ENCODE measurements at regions of chr1 and their contacts with region 1.

Region 1: GRCh38 chr1:150578965-150579798 is at the start of gene MCL1:
- DNase-seq: no peak
- ATAC-seq: peak; percentile 93
- H3K4me3 ChIP-seq: peak within 1 kb of the TSS; percentile 99 to 100
- H3K27ac ChIP-seq: peak within 1 kb of the TSS; percentile 98
- H3K4me1 ChIP-seq: peaks cover 19% of the 10 kb centered on the region
- H3K27me3 ChIP-seq: no peaks in the 10 kb centered on the region
- CTCF ChIP-seq: no peak
- total RNA-seq, gene MCL1: 126 TPM

Region 2: DNA sequence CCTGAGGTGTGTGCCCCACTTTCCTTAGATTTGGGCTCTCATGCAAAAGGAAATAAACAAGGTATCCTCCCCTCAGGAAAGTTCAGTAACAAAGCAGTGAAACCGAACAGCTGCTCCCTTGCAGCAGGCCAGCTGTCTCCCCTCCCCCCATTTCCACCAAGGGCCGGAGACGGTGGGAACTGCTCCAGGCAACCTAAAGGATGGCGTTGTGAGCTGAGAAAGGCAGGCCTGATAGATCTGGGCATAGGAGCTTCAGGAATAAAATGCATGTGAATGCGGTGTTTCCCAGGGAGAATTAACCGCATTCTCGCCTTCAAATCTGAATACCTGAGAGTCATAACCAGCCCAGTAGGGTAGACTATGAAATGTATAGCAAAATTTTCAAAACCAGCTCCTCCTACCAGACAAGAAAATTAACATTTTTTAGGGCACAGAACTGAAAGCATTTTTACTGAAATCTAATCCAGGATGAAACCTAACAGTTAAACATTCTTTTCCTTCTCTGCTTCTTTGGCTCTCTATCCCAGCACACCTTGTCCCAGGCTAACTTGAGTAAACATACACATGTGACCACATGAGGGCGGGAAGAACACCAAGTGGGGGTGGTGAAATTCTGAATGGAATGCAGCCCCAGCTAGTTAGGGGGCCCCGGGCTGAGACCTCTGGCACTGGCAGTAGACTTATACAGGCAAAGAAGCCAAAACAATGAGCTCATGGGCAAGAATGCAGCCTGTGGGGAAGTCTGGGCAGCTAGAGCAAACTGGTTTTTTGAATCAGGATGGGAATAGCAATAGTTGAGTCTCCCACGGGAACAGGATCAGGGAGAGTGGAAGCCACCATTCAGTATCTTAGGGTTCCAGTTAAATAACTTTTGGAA is 11.2 kb before region 1 on chr1:
- CTCF ChIA-PET with region 1: no interaction called
- POLR2A ChIA-PET with region 1: interaction called, 12 read pairs
- in situ Hi-C with region 1: no loop called
- intact Hi-C with region 1: no loop called
- DNase-seq: no peak
- ATAC-seq: peak; percentile 58
- H3K4me3 ChIP-seq: peak overlapping the region; percentile 1 to 9; a peak in 2 of 4 replicates
- H3K27ac ChIP-seq: peak overlapping the region; percentile 82
- H3K4me1 ChIP-seq: peaks cover 73% of the 10 kb centered on the region
- H3K27me3 ChIP-seq: no peaks in the 10 kb centered on the region
- CTCF ChIP-seq: no peak

Region 3: DNA sequence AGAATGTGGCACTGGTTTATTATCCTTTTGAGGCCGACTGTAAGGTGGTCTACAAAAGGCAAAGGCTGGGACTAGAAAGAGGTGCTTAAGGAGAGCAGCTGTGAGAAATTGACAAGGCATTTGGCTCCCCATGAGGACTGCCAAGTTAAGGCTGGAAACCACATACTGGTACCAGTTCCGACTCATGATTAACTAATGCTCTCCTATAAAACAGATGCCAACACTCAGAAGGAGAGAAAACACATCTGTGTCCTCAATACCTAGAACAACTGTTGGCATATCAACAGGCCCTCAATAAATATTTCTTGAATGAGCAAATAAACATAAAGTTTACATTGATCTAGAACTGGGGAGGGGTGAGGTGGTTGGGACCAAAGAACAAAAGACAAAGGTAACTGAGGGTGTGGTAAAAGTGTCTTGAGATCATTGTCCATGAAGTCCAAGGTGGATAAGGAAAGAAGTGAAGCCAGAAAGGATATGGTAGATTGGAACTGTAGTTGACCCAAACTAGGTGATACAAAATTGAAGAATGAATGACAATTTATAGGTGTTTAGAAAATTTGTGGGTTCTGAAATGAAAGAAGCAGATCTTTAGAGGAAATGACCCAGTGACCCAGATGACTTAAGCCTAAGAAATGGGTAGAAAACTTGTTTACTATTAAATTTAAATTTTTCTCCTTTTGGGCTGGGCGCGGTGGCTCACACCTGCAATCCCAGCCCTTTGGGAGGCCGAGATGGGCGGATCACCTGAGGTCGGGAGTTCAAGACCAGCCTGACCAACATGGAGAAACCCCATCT is 17.1 kb after region 1 on chr1:
- CTCF ChIA-PET with region 1: interaction called, 8 read pairs
- POLR2A ChIA-PET with region 1: interaction called, 15 read pairs
- in situ Hi-C with region 1: no loop called
- intact Hi-C with region 1: no loop called
- DNase-seq: no peak
- ATAC-seq: peak; percentile 64
- H3K4me3 ChIP-seq: no peak overlapping the region
- H3K27ac ChIP-seq: no peak overlapping the region
- H3K4me1 ChIP-seq: no peaks in the 10 kb centered on the region
- H3K27me3 ChIP-seq: no peaks in the 10 kb centered on the region
- CTCF ChIP-seq: no peak

Region 4: DNA sequence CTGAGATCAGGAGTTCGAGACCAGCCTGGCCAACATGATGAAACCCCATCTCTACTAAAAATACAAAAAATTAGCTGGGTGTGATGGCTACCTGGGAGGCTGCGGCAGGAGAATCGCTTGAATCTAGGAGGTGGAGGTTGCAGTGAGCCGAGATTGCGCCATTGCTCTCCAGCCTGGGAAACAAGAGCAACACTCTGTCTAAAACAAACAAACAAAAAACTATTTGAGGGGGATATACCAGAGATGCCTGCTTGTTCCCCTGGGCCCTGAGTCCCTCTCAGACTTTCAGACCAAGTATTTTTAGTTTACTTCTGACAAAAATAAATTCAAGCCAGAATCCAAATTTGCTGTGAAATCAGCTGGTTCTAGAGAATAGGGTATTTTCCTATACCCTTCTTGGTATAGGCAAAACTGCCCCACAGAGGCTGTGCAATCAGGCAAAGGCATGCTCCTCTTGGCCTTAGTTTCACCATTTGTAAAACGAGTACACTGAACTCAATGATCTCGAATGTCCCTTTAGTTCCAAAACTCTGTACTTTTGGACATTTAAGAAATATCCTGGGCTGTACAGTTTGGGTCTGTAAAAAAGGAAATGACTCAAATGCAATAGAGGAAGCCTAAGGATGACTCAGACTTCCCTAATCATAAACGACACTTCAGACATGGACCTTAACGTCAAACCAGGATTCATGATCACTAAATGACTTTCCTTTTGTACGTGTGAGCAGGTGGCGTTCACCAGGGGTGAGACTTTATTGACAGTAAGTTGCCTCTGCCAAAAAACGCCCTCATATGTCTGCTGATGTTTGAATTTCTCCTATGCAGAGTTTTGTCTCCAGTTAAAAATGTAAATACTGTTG is 34.1 kb after region 1 on chr1:
- CTCF ChIA-PET with region 1: interaction called, 3 read pairs
- POLR2A ChIA-PET with region 1: interaction called, 7 read pairs
- in situ Hi-C with region 1: no loop called
- intact Hi-C with region 1: loop called (anchors 5 kb)
- DNase-seq: peak; percentile 88
- ATAC-seq: peak; percentile 77
- H3K4me3 ChIP-seq: no peak overlapping the region
- H3K27ac ChIP-seq: peak overlapping the region; percentile 37
- H3K4me1 ChIP-seq: peaks cover 20% of the 10 kb centered on the region
- H3K27me3 ChIP-seq: no peaks in the 10 kb centered on the region
- CTCF ChIP-seq: no peak

Region 5: GRCh38 chr1:150629115-150629928 is 50.1 kb after region 1 on chr1 and contains the start of gene ENSA:
- CTCF ChIA-PET with region 1: no interaction called
- POLR2A ChIA-PET with region 1: interaction called, 10 read pairs
- in situ Hi-C with region 1: no loop called
- intact Hi-C with region 1: no loop called
- DNase-seq: peak; percentile 98
- ATAC-seq: peak; percentile 97
- H3K4me3 ChIP-seq: peak within 1 kb of the TSS; percentile 60 to 96
- H3K27ac ChIP-seq: peak within 1 kb of the TSS; percentile 97
- H3K4me1 ChIP-seq: peaks cover 8% of the 10 kb centered on the region
- H3K27me3 ChIP-seq: no peaks in the 10 kb centered on the region
- CTCF ChIP-seq: no peak
- total RNA-seq, gene ENSA: 207 TPM

Measured in Panc1 (cell line).